ENCODE measurements at regions of chr1 and their contacts with region 1.

Region 1: GRCh38 chr1:183915625-183916510 is 110.9 kb downstream of the RGL1 start:
- DNase-seq: peak; percentile 87 to 96 (median 95)
- H3K4me3 ChIP-seq: no peak overlapping the region
- H3K4me3 Mint-ChIP-seq: peak overlapping the region in 1 of 2 donors; percentile 7
- H3K27ac ChIP-seq: no peak overlapping the region
- H3K27ac Mint-ChIP-seq: peak overlapping the region in 4 of 7 donors; percentile 3 to 36 (median 20)
- H3K4me1 ChIP-seq: peaks cover 31 to 33% of the 10 kb centered on the region in 2 donors
- H3K4me1 Mint-ChIP-seq: peaks cover 33% of the 10 kb centered on the region
- H3K27me3 ChIP-seq: no peaks in the 10 kb centered on the region
- H3K27me3 Mint-ChIP-seq: no peaks in the 10 kb centered on the region
- CTCF ChIP-seq: peak; percentile 85

Region 2: DNA sequence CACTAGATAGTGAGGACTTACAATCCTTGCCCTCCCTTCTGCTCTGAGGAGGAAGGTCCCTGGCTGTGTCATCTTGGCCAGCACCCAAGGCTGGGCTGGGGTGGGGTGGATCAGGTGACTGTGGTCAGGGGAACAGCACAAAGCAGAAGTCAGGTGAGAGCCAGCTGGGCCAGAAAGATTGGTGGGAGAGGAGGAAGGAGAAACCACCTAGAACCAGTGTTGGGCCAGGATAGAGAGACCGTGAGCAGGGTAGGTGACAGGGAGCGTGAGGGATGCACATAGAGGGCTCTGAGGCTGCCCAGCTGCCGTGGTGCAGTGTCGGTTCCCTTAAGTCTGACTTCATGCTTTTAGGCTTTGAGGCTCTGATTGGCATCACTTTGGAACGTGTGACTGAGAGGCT is 348.3 kb before region 1 on chr1:
- intact Hi-C with region 1: no loop called
- DNase-seq: peak; percentile 70 to 85 (median 74)
- H3K4me3 ChIP-seq: peak overlapping the region in 1 of 3 experiments; percentile 10
- H3K4me3 Mint-ChIP-seq: peak overlapping the region; percentile 54
- H3K27ac ChIP-seq: peak overlapping the region; percentile 76 to 80
- H3K27ac Mint-ChIP-seq: peak overlapping the region; percentile 91 to 98 (median 98)
- H3K4me1 ChIP-seq: peaks cover 44 to 48% of the 10 kb centered on the region in 2 donors
- H3K4me1 Mint-ChIP-seq: peaks cover 44% of the 10 kb centered on the region
- H3K27me3 ChIP-seq: no peaks in the 10 kb centered on the region
- H3K27me3 Mint-ChIP-seq: no peaks in the 10 kb centered on the region
- CTCF ChIP-seq: no peak

Region 3: GRCh38 chr1:183655562-183656075 is 260.2 kb before region 1 on chr1:
- intact Hi-C with region 1: loop called (anchors 2 to 5 kb)
- DNase-seq: peak; percentile 60 to 73 (median 72)
- H3K4me3 ChIP-seq: no peak overlapping the region
- H3K4me3 Mint-ChIP-seq: no peak overlapping the region
- H3K27ac ChIP-seq: no peak overlapping the region
- H3K27ac Mint-ChIP-seq: peak overlapping the region in 2 of 7 donors; percentile 11 to 31
- H3K4me1 ChIP-seq: peaks cover 11 to 12% of the 10 kb centered on the region in 2 donors
- H3K4me1 Mint-ChIP-seq: peaks cover 21% of the 10 kb centered on the region
- H3K27me3 ChIP-seq: no peaks in the 10 kb centered on the region
- H3K27me3 Mint-ChIP-seq: peaks cover 0 to 3% (median 0%) of the 10 kb centered on the region in 3 donors
- CTCF ChIP-seq: peak; percentile 91

Region 4: GRCh38 chr1:183804881-183805841 is 110.7 kb before region 1 on chr1 and contains the start of gene RGL1:
- intact Hi-C with region 1: loop called in 1 of 2 experiments (anchors 10 kb)
- DNase-seq: peak; percentile 14 to 53 (median 22)
- H3K4me3 ChIP-seq: peak within 1 kb of the TSS; percentile 59 to 84 (median 67)
- H3K4me3 Mint-ChIP-seq: peak within 1 kb of the TSS; percentile 83 to 98
- H3K27ac ChIP-seq: peak within 1 kb of the TSS in 1 of 2 donors; percentile 1
- H3K27ac Mint-ChIP-seq: peak within 1 kb of the TSS; percentile 20 to 81 (median 45)
- H3K4me1 ChIP-seq: peaks cover 43 to 51% of the 10 kb centered on the region in 2 donors
- H3K4me1 Mint-ChIP-seq: peaks cover 40% of the 10 kb centered on the region
- H3K27me3 ChIP-seq: peaks cover 16 to 20% of the 10 kb centered on the region in 2 donors
- H3K27me3 Mint-ChIP-seq: peaks cover 9 to 28% (median 18%) of the 10 kb centered on the region in 3 donors
- CTCF ChIP-seq: no peak
- polyA plus RNA-seq, gene RGL1: 1.2 to 3.3 (median 2.0) TPM

Region 5: DNA sequence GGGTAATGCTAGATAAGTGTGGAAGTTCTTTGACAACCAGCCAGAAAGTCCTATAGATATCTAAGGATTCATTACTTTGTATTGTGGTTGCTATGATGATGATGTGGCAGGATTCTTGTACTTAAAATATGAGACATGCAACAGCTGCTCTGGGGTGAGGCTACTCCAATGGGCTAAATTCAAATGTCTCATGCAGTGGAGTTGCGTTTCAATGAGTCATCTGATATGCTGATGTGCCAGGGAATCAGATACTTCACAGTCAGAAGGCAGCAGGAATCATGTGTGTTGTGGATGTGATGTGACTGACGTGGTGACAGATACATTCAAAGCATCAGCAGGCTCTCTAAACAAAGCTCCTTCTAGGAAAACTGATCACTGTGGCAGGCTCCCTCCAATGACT is 202.2 kb after region 1 on chr1:
- intact Hi-C with region 1: no loop called
- DNase-seq: peak in 1 of 3 donors; percentile 24
- H3K4me3 ChIP-seq: no peak overlapping the region
- H3K4me3 Mint-ChIP-seq: no peak overlapping the region
- H3K27ac ChIP-seq: no peak overlapping the region
- H3K27ac Mint-ChIP-seq: peak overlapping the region in 1 of 7 donors; percentile 12
- H3K4me1 ChIP-seq: no peaks in the 10 kb centered on the region
- H3K4me1 Mint-ChIP-seq: no peaks in the 10 kb centered on the region
- H3K27me3 ChIP-seq: no peaks in the 10 kb centered on the region
- H3K27me3 Mint-ChIP-seq: peaks cover 0 to 2% (median 0%) of the 10 kb centered on the region in 3 donors
- CTCF ChIP-seq: no peak